MCF 10A (cell line): ENCODE measurements at regions of chr6 and their contacts with region 1.

Region 1: GRCh38 chr6:109095027-109095834 is at the start of gene CEP57L1:
- DNase-seq: peak; percentile 96
- H3K4me3 Mint-ChIP-seq: peak within 1 kb of the TSS; percentile 92
- H3K27ac Mint-ChIP-seq: peak within 1 kb of the TSS; percentile 98
- H3K4me1 Mint-ChIP-seq: peaks cover 36% of the 10 kb centered on the region
- H3K27me3 Mint-ChIP-seq: no peaks in the 10 kb centered on the region
- CTCF ChIP-seq: no peak
- total RNA-seq, gene CEP57L1: 16.7 and 18.9 TPM in 2 replicates

Region 2: DNA sequence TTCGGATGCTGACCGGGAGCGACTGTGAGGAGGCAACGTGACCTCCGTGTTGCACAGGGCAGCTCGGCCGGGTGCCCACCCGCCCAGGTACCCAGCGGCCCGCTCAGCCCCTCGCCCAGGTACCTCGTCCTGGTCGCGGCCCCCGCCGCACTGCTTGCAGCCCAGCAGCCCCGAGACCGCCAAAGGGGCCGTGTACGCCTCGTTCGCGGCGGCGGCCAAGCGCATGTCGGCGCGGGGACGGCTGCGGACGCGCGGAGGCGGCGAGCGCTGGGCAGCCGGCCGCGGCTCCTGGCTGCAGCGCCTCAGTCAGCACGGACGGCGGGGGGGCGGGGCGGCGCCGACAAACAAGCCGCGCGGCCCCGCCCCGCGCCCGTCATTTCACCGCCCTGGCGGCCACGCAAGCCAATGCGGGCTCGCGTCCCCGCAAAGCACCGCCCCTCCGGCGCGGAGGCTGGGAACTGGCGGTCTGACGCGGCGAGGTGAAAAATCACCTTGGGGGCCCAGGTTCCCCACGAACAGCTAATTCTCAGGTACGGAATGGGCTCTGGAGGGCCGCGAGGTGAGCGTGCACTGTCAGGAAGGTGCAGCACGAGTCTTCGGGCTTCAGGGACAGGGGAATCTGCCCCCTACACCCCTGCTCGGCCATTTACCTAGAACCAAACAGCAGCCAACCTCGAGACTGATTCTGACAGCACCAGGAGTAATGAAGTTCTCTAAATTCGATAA is 85.8 kb before region 1 on chr6:
- CTCF ChIA-PET with region 1: no interaction called
- POLR2A ChIA-PET with region 1: interaction called, 93 read pairs
- intact Hi-C with region 1: no loop called
- DNase-seq: peak; percentile 89
- H3K4me3 Mint-ChIP-seq: peak overlapping the region; percentile 93
- H3K27ac Mint-ChIP-seq: peak overlapping the region; percentile 94
- H3K4me1 Mint-ChIP-seq: peaks cover 24% of the 10 kb centered on the region
- H3K27me3 Mint-ChIP-seq: no peaks in the 10 kb centered on the region
- CTCF ChIP-seq: no peak

Region 3: GRCh38 chr6:109059571-109060021 is 35.6 kb before region 1 on chr6:
- CTCF ChIA-PET with region 1: no interaction called
- POLR2A ChIA-PET with region 1: interaction called, 17 read pairs
- intact Hi-C with region 1: no loop called
- DNase-seq: peak; percentile 71
- H3K4me3 Mint-ChIP-seq: peak overlapping the region; percentile 61
- H3K27ac Mint-ChIP-seq: peak overlapping the region; percentile 96
- H3K4me1 Mint-ChIP-seq: peaks cover 52% of the 10 kb centered on the region
- H3K27me3 Mint-ChIP-seq: no peaks in the 10 kb centered on the region
- CTCF ChIP-seq: peak; percentile 56

Region 4: DNA sequence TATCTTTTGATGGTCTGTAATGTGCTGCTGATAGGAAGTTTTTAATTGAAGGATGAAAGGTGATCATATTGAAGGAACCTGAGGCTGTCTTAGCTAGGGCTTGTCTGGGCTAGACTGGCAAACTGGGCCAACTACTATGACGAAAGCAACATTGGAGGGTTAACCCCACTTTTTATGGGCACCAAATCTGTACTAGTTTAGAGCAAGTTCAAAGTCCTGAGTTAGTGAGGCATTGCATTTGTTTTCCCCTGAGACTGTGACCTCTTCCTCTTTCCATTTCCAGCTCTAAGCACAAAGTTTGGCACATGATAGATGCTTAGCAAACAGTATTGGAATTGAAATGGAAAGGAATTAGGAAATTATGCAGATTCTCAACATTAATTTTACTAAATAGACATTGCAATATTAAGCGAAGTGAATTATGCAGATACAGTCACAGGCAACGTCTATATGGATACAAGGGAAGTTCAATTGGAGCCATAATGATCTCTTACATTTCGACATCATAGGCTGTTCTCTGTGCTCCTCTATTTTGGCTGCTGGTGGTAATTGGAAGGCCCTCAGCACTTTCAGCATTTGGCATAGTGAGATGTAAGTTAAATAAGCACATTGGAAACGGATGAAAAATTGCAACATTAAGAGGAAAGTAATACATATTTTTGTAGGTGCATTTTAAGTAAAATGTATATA is 22.3 kb after region 1 on chr6:
- CTCF ChIA-PET with region 1: interaction called, 3 read pairs
- POLR2A ChIA-PET with region 1: interaction called, 17 read pairs
- intact Hi-C with region 1: no loop called
- DNase-seq: peak; percentile 18
- H3K4me3 Mint-ChIP-seq: no peak overlapping the region
- H3K27ac Mint-ChIP-seq: no peak overlapping the region
- H3K4me1 Mint-ChIP-seq: peaks cover 22% of the 10 kb centered on the region
- H3K27me3 Mint-ChIP-seq: no peaks in the 10 kb centered on the region
- CTCF ChIP-seq: no peak